Activated CD8-positive, alpha-beta T cell treated with anti-CD3 and anti-CD28 coated beads, Interleukin-2, amount 10 ng/mL, durations not matched to agents 7 days and 5 days (primary cell): ENCODE measurements at regions of chr11 and their contacts with region 1.

Region 1: DNA sequence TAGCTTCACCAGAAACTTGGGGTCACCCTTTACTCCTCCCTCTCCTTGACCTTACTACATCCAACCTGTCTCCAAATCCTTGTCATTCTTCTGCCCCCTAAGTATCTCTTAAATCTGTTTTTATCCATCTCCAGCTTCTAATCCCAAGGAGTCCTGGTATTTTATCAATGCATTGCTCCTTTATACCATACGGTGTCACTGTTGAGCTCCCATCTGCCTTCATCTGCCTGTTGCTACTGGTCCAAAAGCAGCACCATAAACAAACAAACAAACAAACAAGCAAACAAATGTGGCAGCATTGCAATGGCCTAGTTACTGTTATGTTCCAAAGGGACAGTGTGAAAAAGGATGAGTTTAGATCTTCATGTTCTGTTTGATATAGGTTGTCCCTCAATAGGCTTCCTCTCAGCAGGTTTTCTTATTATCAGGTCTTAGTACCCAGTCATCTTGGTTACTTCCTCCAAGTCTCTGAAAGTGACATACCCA is 34.2 kb downstream of the DNHD1 start:
- DNase-seq: peak; percentile 41
- ATAC-seq: peak; percentile 69
- H3K4me3 Mint-ChIP-seq: no peak overlapping the region
- H3K27ac Mint-ChIP-seq: no peak overlapping the region
- H3K4me1 Mint-ChIP-seq: peaks cover 14% of the 10 kb centered on the region
- H3K27me3 Mint-ChIP-seq: no peaks in the 10 kb centered on the region

Region 2: DNA sequence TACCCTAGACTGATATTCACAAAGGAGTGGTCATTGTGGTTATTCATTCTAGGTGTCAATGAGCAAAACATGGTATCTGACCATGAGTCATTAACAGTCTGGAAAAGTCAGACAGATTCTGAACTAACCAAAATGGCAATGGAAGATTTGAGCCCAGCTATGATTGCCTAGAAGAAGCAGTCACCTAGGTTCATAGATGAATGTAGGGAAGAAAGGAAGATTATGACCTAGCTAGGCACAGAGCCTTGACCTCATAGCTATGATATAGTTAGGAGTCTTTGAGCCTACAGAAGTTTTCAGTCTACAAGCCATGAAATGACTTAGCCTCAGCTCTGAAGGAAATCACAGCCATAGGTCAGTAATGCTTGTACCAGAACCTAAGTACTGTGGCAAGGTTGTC is 524.9 kb before region 1 on chr11:
- CTCF ChIA-PET with region 1: no interaction called
- POLR2A ChIA-PET with region 1: no interaction called
- DNase-seq: no peak
- ATAC-seq: no peak
- H3K4me3 Mint-ChIP-seq: no peak overlapping the region
- H3K27ac Mint-ChIP-seq: no peak overlapping the region
- H3K4me1 Mint-ChIP-seq: no peaks in the 10 kb centered on the region
- H3K27me3 Mint-ChIP-seq: peaks cover 8% of the 10 kb centered on the region

Region 3: DNA sequence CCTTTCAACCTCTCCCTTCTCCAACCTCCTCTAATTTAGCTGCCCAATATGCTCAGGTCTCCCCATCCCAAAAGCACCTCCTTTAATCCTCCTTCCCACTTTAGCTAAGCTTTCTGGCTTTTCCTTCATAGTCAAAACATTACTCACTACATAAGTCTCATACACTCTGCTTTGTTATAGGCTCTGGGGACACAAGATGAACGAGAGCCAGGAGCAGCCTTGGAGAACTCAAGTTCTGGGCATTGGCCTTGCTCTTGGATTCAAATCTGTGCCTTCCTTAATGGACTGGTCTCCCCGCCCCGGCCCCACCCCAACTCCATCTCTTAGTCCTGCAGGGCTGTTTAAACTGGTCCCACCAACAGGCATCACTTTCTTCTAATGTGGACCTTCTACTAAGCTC is 79.1 kb before region 1 on chr11:
- CTCF ChIA-PET with region 1: no interaction called
- POLR2A ChIA-PET with region 1: no interaction called
- DNase-seq: no peak
- ATAC-seq: no peak
- H3K4me3 Mint-ChIP-seq: no peak overlapping the region
- H3K27ac Mint-ChIP-seq: no peak overlapping the region
- H3K4me1 Mint-ChIP-seq: no peaks in the 10 kb centered on the region
- H3K27me3 Mint-ChIP-seq: no peaks in the 10 kb centered on the region

Region 4: DNA sequence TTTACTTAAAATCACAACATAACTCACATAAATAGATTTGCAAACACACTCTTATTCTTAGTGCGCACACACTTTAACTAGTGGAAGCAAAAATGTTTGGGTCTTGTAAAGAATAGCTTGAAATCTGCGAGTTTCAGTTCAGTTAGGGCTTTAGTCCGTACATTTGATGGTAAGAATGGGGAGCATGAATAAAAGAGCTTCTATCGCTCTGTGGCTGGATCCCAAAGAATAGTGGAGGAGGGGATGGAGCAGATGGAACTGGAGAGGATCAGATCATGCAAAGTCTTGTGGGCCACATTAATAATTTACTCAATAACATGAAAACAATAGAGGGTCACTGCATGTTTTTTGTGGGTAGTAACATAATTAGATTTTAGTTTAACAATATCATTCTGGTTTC is 10.0 kb after region 1 on chr11:
- CTCF ChIA-PET with region 1: interaction called, 36 read pairs
- POLR2A ChIA-PET with region 1: no interaction called
- DNase-seq: no peak
- ATAC-seq: no peak
- H3K4me3 Mint-ChIP-seq: no peak overlapping the region
- H3K27ac Mint-ChIP-seq: no peak overlapping the region
- H3K4me1 Mint-ChIP-seq: peaks cover 22% of the 10 kb centered on the region
- H3K27me3 Mint-ChIP-seq: no peaks in the 10 kb centered on the region

Region 5: GRCh38 chr11:6612213-6613041 is 81.1 kb after region 1 on chr11 and contains the start of gene TAF10:
- CTCF ChIA-PET with region 1: interaction called, 10 read pairs
- POLR2A ChIA-PET with region 1: interaction called, 3 read pairs
- DNase-seq: peak; percentile 98
- ATAC-seq: peak; percentile 95
- H3K4me3 Mint-ChIP-seq: peak within 1 kb of the TSS; percentile 89
- H3K27ac Mint-ChIP-seq: peak within 1 kb of the TSS; percentile 92
- H3K4me1 Mint-ChIP-seq: peaks cover 42% of the 10 kb centered on the region
- H3K27me3 Mint-ChIP-seq: no peaks in the 10 kb centered on the region
- total RNA-seq, gene TAF10: 140 to 156 TPM

Region 6: GRCh38 chr11:6667733-6668374 is 136.5 kb after region 1 on chr11:
- CTCF ChIA-PET with region 1: interaction called, 24 read pairs
- POLR2A ChIA-PET with region 1: no interaction called
- DNase-seq: peak; percentile 71
- ATAC-seq: peak; percentile 80
- H3K4me3 Mint-ChIP-seq: no peak overlapping the region
- H3K27ac Mint-ChIP-seq: peak overlapping the region; percentile 68
- H3K4me1 Mint-ChIP-seq: peaks cover 72% of the 10 kb centered on the region
- H3K27me3 Mint-ChIP-seq: peaks cover 3% of the 10 kb centered on the region

Region 7: GRCh38 chr11:6746086-6746618 is 214.8 kb after region 1 on chr11:
- CTCF ChIA-PET with region 1: interaction called, 18 read pairs
- POLR2A ChIA-PET with region 1: no interaction called
- DNase-seq: peak; percentile 65
- ATAC-seq: peak; percentile 85
- H3K4me3 Mint-ChIP-seq: no peak overlapping the region
- H3K27ac Mint-ChIP-seq: no peak overlapping the region
- H3K4me1 Mint-ChIP-seq: peaks cover 41% of the 10 kb centered on the region
- H3K27me3 Mint-ChIP-seq: no peaks in the 10 kb centered on the region